Panc1 (cell line): ENCODE measurements at regions of chr17 and their contacts with region 1.

Region 1: DNA sequence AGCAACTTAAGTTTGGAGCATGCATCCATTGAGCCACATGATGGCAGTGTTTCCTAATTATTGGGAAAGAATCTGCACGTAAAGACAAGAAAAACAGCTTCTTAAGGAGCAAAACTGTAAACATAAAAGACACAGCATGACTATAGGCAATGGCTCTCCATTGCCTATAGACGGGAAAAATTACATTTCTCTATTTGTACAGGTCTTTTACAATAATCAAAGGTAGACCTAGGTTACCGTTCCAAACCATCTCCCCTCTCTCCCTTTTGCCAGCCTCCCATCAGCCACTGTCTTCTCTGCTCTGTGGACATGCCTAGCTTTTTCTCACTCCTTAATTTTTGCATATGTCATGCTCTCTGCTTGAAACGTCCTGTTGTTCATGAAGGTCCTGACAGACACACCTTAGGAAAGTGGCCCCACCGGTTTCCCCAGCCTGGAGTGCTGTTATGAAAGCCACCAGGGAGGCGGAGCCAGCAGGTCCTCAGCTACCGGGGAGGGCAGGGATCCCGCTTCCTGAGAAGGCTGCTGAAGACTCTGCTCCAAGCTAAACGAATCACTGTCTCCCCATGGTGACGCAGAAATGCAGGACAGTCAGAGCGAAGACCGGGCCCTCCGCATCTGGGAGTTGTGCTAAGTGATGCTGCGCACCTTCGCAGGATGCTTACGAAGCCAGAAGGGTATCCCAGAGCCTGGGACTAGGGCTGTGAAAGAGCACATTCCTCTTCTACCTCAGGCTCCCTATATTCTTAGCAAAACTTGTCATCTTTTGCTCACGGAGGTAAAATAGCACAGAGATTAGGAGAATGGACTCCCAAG is 2.2 kb upstream of the SLC16A11 start:
- DNase-seq: peak; percentile 77
- ATAC-seq: peak; percentile 37; the same call in 1 of the 2 replicates
- H3K4me3 ChIP-seq: 0 out of 4 replicates have a peak overlapping the region, but pooled peaks of 1 of the 2 experiments have one; percentile 6
- H3K27ac ChIP-seq: no peak overlapping the region
- H3K4me1 ChIP-seq: peaks cover 22% of the 10 kb centered on the region
- H3K27me3 ChIP-seq: no peaks in the 10 kb centered on the region
- CTCF ChIP-seq: peak; percentile 75; the same call in 1 of the 2 replicates

Region 2: GRCh38 chr17:7007146-7007545 is 39.0 kb before region 1 on chr17:
- CTCF ChIA-PET with region 1: no interaction called
- POLR2A ChIA-PET with region 1: no interaction called
- in situ Hi-C with region 1: no loop called
- intact Hi-C with region 1: no loop called
- DNase-seq: no peak
- ATAC-seq: no peak
- H3K4me3 ChIP-seq: no peak overlapping the region
- H3K27ac ChIP-seq: no peak overlapping the region
- H3K4me1 ChIP-seq: peaks cover 8% of the 10 kb centered on the region
- H3K27me3 ChIP-seq: no peaks in the 10 kb centered on the region
- CTCF ChIP-seq: no peak

Region 3: DNA sequence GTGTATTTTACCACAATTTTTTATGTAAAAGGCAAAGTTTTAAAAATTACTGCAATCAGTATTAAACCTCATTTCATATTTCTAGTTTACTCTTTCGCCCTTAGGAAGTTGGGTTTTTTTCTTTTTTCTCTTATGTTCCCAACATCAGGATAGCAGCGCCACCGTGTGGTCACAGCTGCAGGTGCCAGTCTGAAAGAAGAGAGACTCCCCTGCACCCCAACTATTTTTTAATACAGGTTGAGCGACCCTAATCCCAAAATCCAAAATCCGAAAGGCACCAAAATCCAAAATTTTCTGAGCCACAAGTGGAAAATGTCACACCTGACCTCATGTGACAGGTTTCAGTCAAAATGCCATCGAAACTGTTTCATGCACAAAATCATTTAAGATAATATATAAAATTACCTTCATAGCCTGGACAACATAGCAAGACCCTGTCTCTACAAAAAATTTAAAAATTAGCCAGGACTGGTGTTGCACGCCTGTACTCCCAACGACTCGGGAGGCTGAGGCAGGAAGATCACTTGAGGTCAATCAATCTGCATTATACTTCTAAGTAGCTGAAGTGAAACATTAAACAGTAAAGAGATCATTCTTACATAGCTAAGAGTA is 90.3 kb after region 1 on chr17:
- CTCF ChIA-PET with region 1: interaction called, 13 read pairs
- POLR2A ChIA-PET with region 1: interaction called, 7 read pairs
- in situ Hi-C with region 1: no loop called
- intact Hi-C with region 1: no loop called
- DNase-seq: peak; percentile 61
- ATAC-seq: no peak
- H3K4me3 ChIP-seq: peak overlapping the region; percentile 21 to 43
- H3K27ac ChIP-seq: no peak overlapping the region
- H3K4me1 ChIP-seq: no peaks in the 10 kb centered on the region; the same call in 1 of the 2 replicates
- H3K27me3 ChIP-seq: no peaks in the 10 kb centered on the region
- CTCF ChIP-seq: peak; percentile 90

Region 4: DNA sequence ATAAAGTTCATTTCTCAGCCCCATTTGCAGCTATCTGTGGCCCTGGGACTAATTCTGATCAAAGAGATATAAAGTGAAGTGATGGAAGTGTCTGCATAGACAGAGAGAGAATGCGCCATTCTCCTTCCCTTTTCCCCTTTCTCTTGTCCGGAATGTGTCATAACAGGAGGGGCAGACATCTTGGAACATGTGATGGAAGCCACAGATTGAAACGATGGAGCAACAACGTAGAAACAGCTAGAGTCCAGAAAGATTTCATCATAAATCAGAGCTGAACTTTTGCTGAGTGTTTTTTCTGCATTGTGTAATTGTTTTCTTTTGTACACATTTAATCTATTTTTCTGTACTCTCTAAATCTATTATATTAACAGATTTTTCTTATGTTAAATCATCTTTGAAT is 121.7 kb after region 1 on chr17:
- CTCF ChIA-PET with region 1: interaction called, 9 read pairs
- POLR2A ChIA-PET with region 1: no interaction called
- in situ Hi-C with region 1: no loop called
- intact Hi-C with region 1: loop called (anchors 10 kb)
- DNase-seq: no peak
- ATAC-seq: no peak
- H3K4me3 ChIP-seq: no peak overlapping the region
- H3K27ac ChIP-seq: no peak overlapping the region
- H3K4me1 ChIP-seq: no peaks in the 10 kb centered on the region
- H3K27me3 ChIP-seq: no peaks in the 10 kb centered on the region
- CTCF ChIP-seq: no peak

Region 5: GRCh38 chr17:7215652-7216180 is 169.6 kb after region 1 on chr17:
- CTCF ChIA-PET with region 1: interaction called, 12 read pairs
- POLR2A ChIA-PET with region 1: interaction called, 4 read pairs
- in situ Hi-C with region 1: no loop called
- intact Hi-C with region 1: no loop called
- DNase-seq: no peak
- ATAC-seq: no peak
- H3K4me3 ChIP-seq: peak overlapping the region; percentile 53 to 70
- H3K27ac ChIP-seq: peak overlapping the region; percentile 73
- H3K4me1 ChIP-seq: peaks cover 29% of the 10 kb centered on the region
- H3K27me3 ChIP-seq: no peaks in the 10 kb centered on the region
- CTCF ChIP-seq: no peak